ENCODE measurements at regions of chr16 and their contacts with region 1.

Region 1: GRCh38 chr16:68310761-68311511 is at the starts of genes PRMT7 and SLC7A6OS:
- DNase-seq: peak; percentile 88 to 96
- ATAC-seq: peak; percentile 96 to 100 (median 96)
- H3K4me3 ChIP-seq: peak within 1 kb of the TSS; percentile 61
- H3K4me3 Mint-ChIP-seq: peak within 1 kb of the TSS; percentile 96
- H3K27ac ChIP-seq: peak within 1 kb of the TSS; percentile 69
- H3K27ac Mint-ChIP-seq: peak within 1 kb of the TSS; percentile 93 to 96
- H3K4me1 ChIP-seq: peaks cover 29% of the 10 kb centered on the region
- H3K4me1 Mint-ChIP-seq: peaks cover 30 to 39% of the 10 kb centered on the region in 2 donors
- H3K27me3 ChIP-seq: no peaks in the 10 kb centered on the region
- H3K27me3 Mint-ChIP-seq: no peaks in the 10 kb centered on the region
- CTCF ChIP-seq: no peak
- total RNA-seq, gene PRMT7: 60.7 to 84.7 (median 68.2) TPM
- total RNA-seq, gene SLC7A6OS: 46.3 to 57.3 (median 56.1) TPM

Region 2: DNA sequence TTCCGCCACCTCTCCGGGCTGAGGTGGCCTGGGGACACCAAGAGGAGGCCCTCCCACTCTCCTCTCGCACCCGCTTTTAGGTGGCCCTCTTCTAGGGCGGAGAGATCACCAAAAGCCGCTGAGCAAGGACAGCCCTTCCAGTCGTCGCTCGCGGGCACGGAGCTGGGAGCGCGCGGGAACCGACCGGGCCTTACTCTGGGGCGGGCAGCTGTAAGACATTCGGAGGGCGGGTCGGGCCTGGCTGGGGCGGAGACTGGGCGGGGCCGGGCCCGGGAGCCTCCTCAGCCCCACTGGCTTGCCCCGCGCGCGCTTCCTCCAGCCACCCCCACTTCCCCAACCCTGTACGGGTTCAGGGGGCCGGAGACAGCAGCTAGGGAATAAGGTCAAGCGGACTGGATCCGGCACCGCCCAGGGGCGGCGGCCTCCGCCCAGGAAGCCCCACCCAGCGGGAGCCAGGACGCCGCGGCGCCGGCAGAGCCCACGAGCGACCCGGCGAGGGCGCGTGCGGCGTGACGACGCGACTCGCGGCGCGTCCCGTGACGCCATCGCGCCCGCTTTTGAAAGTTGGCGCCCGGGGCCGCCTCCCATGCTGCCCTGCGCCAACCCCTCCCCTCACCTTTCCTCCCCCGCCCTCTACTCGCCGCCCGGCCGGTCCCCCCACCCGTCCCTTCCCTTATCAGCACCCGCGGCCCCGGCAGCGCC is 749.0 kb before region 1 on chr16:
- intact Hi-C with region 1: loop called (anchors 10 kb)
- DNase-seq: peak; percentile 93 to 98
- ATAC-seq: peak; percentile 75 to 90 (median 77)
- H3K4me3 ChIP-seq: peak overlapping the region; percentile 71
- H3K4me3 Mint-ChIP-seq: peak overlapping the region; percentile 95
- H3K27ac ChIP-seq: peak overlapping the region; percentile 87
- H3K27ac Mint-ChIP-seq: peak overlapping the region; percentile 93 to 95
- H3K4me1 ChIP-seq: peaks cover 23% of the 10 kb centered on the region
- H3K4me1 Mint-ChIP-seq: peaks cover 24 to 31% of the 10 kb centered on the region in 2 donors
- H3K27me3 ChIP-seq: no peaks in the 10 kb centered on the region
- H3K27me3 Mint-ChIP-seq: no peaks in the 10 kb centered on the region
- CTCF ChIP-seq: no peak

Region 3: DNA sequence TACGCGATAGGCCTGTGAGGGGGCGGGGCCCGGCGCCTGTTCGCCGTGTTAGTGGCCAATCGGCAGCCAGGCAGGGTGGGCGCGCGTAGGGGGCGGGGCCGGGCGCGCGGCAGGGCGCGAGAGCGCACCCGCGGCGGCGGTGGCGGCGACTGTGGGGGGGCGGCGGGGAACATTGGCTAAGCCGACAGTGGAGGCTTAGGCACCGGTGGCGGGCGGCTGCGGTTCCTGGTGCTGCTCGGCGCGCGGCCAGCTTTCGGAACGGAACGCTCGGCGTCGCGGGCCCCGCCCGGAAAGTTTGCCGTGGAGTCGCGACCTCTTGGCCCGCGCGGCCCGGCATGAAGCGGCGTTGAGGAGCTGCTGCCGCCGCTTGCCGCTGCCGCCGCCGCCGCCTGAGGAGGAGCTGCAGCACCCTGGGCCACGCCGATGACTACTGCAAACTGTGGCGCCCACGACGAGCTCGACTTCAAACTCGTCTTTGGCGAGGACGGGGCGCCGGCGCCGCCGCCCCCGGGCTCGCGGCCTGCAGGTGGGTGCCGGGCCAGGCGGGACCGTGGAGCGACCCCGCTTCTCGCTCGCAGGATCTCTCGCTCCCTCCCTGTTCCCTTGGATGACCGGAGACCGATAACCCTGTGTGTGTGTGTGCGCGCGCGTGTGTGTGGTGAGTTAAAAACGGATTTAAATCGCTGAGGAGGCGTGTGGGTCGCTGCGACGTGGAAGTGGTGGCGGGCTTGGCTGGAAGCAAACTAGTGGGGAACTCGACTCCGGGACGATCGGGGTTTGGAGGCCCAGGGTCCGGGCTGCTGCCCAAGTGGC is 225.5 kb before region 1 on chr16 and contains the start of gene NFATC3:
- intact Hi-C with region 1: loop called (anchors 10 kb)
- DNase-seq: peak; percentile 97 to 98
- ATAC-seq: peak; percentile 75 to 93 (median 83)
- H3K4me3 ChIP-seq: peak within 1 kb of the TSS; percentile 94
- H3K4me3 Mint-ChIP-seq: peak within 1 kb of the TSS; percentile 88
- H3K27ac ChIP-seq: peak within 1 kb of the TSS; percentile 95
- H3K27ac Mint-ChIP-seq: peak within 1 kb of the TSS; percentile 81 to 90
- H3K4me1 ChIP-seq: peaks cover 51% of the 10 kb centered on the region
- H3K4me1 Mint-ChIP-seq: peaks cover 67 to 72% of the 10 kb centered on the region in 2 donors
- H3K27me3 ChIP-seq: no peaks in the 10 kb centered on the region
- H3K27me3 Mint-ChIP-seq: no peaks in the 10 kb centered on the region
- CTCF ChIP-seq: no peak
- total RNA-seq, gene NFATC3: 241 to 282 (median 263) TPM

Region 4: GRCh38 chr16:68264128-68265077 is 46.5 kb before region 1 on chr16 and contains the start of gene SLC7A6:
- intact Hi-C with region 1: loop called (anchors 1 kb)
- DNase-seq: peak; percentile 86 to 91
- ATAC-seq: peak; percentile 73 to 88 (median 77)
- H3K4me3 ChIP-seq: peak within 1 kb of the TSS; percentile 89
- H3K4me3 Mint-ChIP-seq: peak within 1 kb of the TSS; percentile 96
- H3K27ac ChIP-seq: peak within 1 kb of the TSS; percentile 98
- H3K27ac Mint-ChIP-seq: peak within 1 kb of the TSS; percentile 95 to 100
- H3K4me1 ChIP-seq: peaks cover 39% of the 10 kb centered on the region
- H3K4me1 Mint-ChIP-seq: peaks cover 25 to 48% of the 10 kb centered on the region in 2 donors
- H3K27me3 ChIP-seq: no peaks in the 10 kb centered on the region
- H3K27me3 Mint-ChIP-seq: no peaks in the 10 kb centered on the region
- CTCF ChIP-seq: peak; percentile 73
- total RNA-seq, gene SLC7A6: 46.6 to 84.9 (median 69.6) TPM

Region 5: GRCh38 chr16:68287276-68288251 is 23.4 kb before region 1 on chr16:
- intact Hi-C with region 1: loop called (anchors 1 kb)
- DNase-seq: peak in 1 of 2 donors; percentile 73
- ATAC-seq: peak; percentile 3 to 15 (median 6)
- H3K4me3 ChIP-seq: no peak overlapping the region
- H3K4me3 Mint-ChIP-seq: peak overlapping the region; percentile 51
- H3K27ac ChIP-seq: peak overlapping the region; percentile 74
- H3K27ac Mint-ChIP-seq: peak overlapping the region; percentile 77 to 88
- H3K4me1 ChIP-seq: peaks cover 96% of the 10 kb centered on the region
- H3K4me1 Mint-ChIP-seq: peaks cover 85 to 90% of the 10 kb centered on the region in 2 donors
- H3K27me3 ChIP-seq: no peaks in the 10 kb centered on the region
- H3K27me3 Mint-ChIP-seq: no peaks in the 10 kb centered on the region
- CTCF ChIP-seq: no peak

Region 6: GRCh38 chr16:68298907-68299561 is 11.9 kb before region 1 on chr16:
- intact Hi-C with region 1: no loop called
- DNase-seq: peak in 1 of 2 donors; percentile 2
- ATAC-seq: no peak
- H3K4me3 ChIP-seq: no peak overlapping the region
- H3K4me3 Mint-ChIP-seq: no peak overlapping the region
- H3K27ac ChIP-seq: no peak overlapping the region
- H3K27ac Mint-ChIP-seq: peak overlapping the region in 1 of 2 donors; percentile 43
- H3K4me1 ChIP-seq: no peaks in the 10 kb centered on the region
- H3K4me1 Mint-ChIP-seq: peaks cover 5% of the 10 kb centered on the region in 2 donors
- H3K27me3 ChIP-seq: no peaks in the 10 kb centered on the region
- H3K27me3 Mint-ChIP-seq: no peaks in the 10 kb centered on the region
- CTCF ChIP-seq: no peak